CD8-positive, alpha-beta T cell (primary cell): ENCODE measurements at regions of chr6 and their contacts with region 1.

Region 1: DNA sequence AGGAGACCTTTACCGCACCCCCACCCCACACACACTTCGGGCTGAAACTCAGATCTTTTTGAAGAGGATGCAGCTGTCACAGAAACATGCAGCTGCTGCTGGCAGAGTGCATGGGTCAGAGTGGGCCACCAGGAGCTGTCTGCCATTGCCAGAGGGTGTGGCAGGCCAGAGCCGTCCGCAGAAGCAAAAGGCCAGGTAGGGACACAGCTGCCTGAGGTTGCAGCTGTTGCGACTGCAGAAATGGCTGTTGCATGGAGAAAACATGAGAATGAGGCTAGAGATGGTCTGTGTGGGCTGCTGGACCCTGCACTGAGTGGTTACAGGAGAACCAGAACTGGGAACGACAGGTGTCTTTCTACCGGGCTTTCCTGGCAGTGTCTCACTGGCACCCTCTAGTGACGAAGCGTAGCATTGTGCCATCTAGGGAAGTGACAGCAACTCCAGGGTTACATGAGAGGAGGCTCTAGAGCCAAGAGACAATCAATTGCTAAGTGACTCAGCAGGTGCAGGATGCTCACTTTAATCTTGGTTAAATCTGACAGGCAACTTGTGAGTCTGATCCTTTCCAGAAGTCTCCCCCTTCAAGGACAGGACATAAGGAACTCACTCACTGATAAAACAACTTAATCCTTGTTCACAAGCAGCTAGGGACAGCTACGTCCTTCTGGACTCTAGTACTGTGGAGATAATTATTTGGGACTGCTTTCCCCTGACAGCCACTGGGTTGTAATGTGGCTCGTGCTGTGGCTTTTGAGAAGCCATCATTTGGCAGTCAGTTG is 29.1 kb upstream of the SERPINB9 start:
- DNase-seq: peak; percentile 74 to 90 (median 86)
- ATAC-seq: peak; percentile 86
- H3K4me3 ChIP-seq: no peak overlapping the region
- H3K4me3 Mint-ChIP-seq: peak overlapping the region; percentile 45
- H3K27ac ChIP-seq: no peak overlapping the region
- H3K27ac Mint-ChIP-seq: peak overlapping the region; percentile 38
- H3K4me1 ChIP-seq: peaks cover 27% of the 10 kb centered on the region
- H3K4me1 Mint-ChIP-seq: peaks cover 27% of the 10 kb centered on the region
- H3K27me3 ChIP-seq: no peaks in the 10 kb centered on the region
- H3K27me3 Mint-ChIP-seq: no peaks in the 10 kb centered on the region
- CTCF ChIP-seq: peak; percentile 92

Region 2: DNA sequence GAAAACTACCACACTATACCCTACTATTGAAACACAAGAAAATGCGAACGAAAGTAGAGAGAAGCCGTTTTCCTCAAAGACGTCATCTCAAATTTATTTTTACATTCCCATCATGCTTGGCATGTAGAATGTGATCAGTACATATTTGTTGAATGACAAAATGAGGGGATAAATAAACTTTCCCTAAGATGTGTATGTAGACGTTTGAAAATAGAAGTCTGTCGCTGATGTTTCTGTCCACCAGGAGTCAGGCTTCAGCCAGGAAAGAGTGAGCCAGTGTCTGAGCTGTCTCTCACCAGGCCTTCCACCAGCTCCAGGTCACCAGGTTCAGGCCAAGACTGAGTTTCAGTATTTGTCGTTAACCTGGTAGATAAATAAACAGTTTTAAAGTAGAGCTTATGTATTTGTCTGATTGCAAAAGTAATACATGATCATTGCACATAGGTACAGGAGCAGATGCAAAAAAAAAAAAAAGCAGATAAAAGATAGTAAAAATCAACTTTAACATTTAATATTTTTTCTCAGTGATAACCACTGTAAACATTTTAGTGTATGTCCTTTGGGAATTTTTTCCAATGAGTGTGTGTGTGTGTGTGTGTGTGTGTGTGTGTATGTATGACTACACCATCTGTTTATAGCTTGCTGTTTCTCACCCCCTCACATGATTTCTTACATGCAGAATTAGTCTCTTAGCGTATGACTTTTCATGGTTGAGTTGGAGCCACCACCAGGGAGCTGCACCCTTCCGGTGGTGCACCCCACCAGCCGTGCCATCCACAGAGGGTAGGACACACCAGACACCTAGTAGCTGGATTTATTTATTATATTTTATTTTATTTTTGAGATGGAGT is 140.8 kb before region 1 on chr6:
- CTCF ChIA-PET with region 1: interaction called, 41 read pairs
- POLR2A ChIA-PET with region 1: no interaction called
- intact Hi-C with region 1: loop called (anchors 1 kb)
- DNase-seq: peak in 8 of 9 experiments; percentile 21 to 75 (median 47)
- ATAC-seq: peak; percentile 79
- H3K4me3 ChIP-seq: no peak overlapping the region
- H3K4me3 Mint-ChIP-seq: peak overlapping the region; percentile 13
- H3K27ac ChIP-seq: peak overlapping the region in 1 of 2 experiments; percentile 10
- H3K27ac Mint-ChIP-seq: peak overlapping the region; percentile 77
- H3K4me1 ChIP-seq: peaks cover 33% of the 10 kb centered on the region
- H3K4me1 Mint-ChIP-seq: peaks cover 32% of the 10 kb centered on the region
- H3K27me3 ChIP-seq: no peaks in the 10 kb centered on the region
- H3K27me3 Mint-ChIP-seq: no peaks in the 10 kb centered on the region
- CTCF ChIP-seq: peak; percentile 73

Region 3: GRCh38 chr6:2848851-2849250 is 83.3 kb before region 1 on chr6:
- CTCF ChIA-PET with region 1: interaction called, 306 read pairs
- POLR2A ChIA-PET with region 1: interaction called, 5 read pairs
- intact Hi-C with region 1: loop called (anchors 1 kb)
- DNase-seq: peak; percentile 30 to 87 (median 75)
- ATAC-seq: peak; percentile 88
- H3K4me3 ChIP-seq: no peak overlapping the region
- H3K4me3 Mint-ChIP-seq: peak overlapping the region; percentile 27
- H3K27ac ChIP-seq: peak overlapping the region; percentile 1 to 26
- H3K27ac Mint-ChIP-seq: peak overlapping the region; percentile 92
- H3K4me1 ChIP-seq: peaks cover 27% of the 10 kb centered on the region
- H3K4me1 Mint-ChIP-seq: peaks cover 40% of the 10 kb centered on the region
- H3K27me3 ChIP-seq: no peaks in the 10 kb centered on the region
- H3K27me3 Mint-ChIP-seq: no peaks in the 10 kb centered on the region
- CTCF ChIP-seq: no peak

Region 4: DNA sequence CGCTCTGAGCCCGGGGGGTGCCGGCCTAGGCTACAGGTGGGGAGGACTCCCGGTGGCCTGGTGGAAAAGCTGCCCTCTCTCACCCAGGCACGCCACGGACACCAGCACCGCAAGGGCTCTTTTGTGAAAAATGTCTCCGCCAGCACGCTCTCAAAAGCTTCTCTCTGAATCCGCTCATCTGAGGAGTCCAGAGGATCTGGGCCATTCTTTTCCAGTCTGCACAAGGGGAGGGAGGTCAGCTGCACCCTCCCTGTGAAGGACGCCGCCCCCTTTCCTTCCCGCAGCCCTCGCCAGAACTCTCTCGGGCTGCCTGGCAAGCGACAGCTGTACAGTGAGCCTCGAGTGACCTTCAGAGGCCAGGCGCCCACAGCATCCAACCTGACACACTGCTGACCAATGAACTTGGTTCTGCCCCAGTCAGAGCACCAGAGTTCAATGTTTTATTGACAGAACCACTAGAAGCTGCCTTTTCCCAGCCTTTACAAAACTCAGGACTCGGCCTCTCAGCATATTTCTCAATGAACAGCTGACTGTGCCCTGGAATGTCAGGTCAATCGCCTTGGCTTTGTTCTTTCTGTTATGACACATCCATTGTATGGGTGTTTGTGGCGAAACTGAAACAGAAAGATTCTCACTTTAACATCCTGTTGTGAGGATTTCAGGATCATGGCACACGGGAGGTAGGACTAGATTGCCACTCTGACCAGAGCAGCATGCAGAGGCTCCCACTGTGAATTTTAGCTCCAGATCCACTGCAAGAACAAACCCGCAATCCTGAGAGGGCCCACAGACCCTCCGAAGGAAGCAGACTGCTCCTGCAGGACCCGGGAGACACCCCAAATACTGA is 55.7 kb before region 1 on chr6:
- CTCF ChIA-PET with region 1: interaction called, 16 read pairs
- POLR2A ChIA-PET with region 1: no interaction called
- intact Hi-C with region 1: no loop called
- DNase-seq: peak in 3 of 9 experiments; percentile 38 to 67 (median 57)
- ATAC-seq: peak; percentile 9
- H3K4me3 ChIP-seq: peak overlapping the region; percentile 33 to 65
- H3K4me3 Mint-ChIP-seq: peak overlapping the region; percentile 87
- H3K27ac ChIP-seq: peak overlapping the region; percentile 24 to 77
- H3K27ac Mint-ChIP-seq: peak overlapping the region; percentile 93
- H3K4me1 ChIP-seq: peaks cover 68% of the 10 kb centered on the region
- H3K4me1 Mint-ChIP-seq: peaks cover 78% of the 10 kb centered on the region
- H3K27me3 ChIP-seq: no peaks in the 10 kb centered on the region
- H3K27me3 Mint-ChIP-seq: no peaks in the 10 kb centered on the region
- CTCF ChIP-seq: no peak

Region 5: DNA sequence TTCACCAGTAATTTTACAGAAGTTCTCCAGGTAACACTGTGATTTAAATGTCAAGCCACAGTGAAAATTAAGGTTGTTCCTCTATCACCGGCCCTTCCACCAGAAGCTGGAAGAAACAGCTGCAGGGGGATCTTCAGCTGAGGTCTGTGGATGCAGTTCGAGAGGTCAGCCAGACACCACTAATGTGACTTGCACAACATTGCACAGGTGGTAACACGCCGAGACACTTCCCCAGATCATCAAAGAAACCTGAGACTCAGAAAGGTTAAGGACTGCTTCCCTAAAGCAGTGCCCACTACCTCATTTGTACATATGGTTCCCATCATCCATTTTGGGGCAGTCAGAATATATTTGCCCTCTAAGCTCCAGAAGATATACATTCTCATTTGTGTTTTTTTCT is 21.0 kb before region 1 on chr6:
- CTCF ChIA-PET with region 1: interaction called, 31 read pairs
- POLR2A ChIA-PET with region 1: interaction called, 4 read pairs
- intact Hi-C with region 1: loop called (anchors 1 to 2 kb)
- DNase-seq: no peak
- ATAC-seq: no peak
- H3K4me3 ChIP-seq: no peak overlapping the region
- H3K4me3 Mint-ChIP-seq: no peak overlapping the region
- H3K27ac ChIP-seq: no peak overlapping the region
- H3K27ac Mint-ChIP-seq: no peak overlapping the region
- H3K4me1 ChIP-seq: no peaks in the 10 kb centered on the region
- H3K4me1 Mint-ChIP-seq: peaks cover 33% of the 10 kb centered on the region
- H3K27me3 ChIP-seq: no peaks in the 10 kb centered on the region
- H3K27me3 Mint-ChIP-seq: no peaks in the 10 kb centered on the region
- CTCF ChIP-seq: no peak

Region 6: GRCh38 chr6:2952557-2953095 is 20.5 kb after region 1 on chr6:
- CTCF ChIA-PET with region 1: interaction called, 119 read pairs
- POLR2A ChIA-PET with region 1: interaction called, 6 read pairs
- intact Hi-C with region 1: loop called in 1 of 2 experiments (anchors 2 kb)
- DNase-seq: peak in 8 of 9 experiments; percentile 44 to 81 (median 64)
- ATAC-seq: peak; percentile 94
- H3K4me3 ChIP-seq: peak overlapping the region in 1 of 2 experiments; percentile 18
- H3K4me3 Mint-ChIP-seq: peak overlapping the region; percentile 62
- H3K27ac ChIP-seq: no peak overlapping the region
- H3K27ac Mint-ChIP-seq: peak overlapping the region; percentile 67
- H3K4me1 ChIP-seq: peaks cover 13% of the 10 kb centered on the region
- H3K4me1 Mint-ChIP-seq: peaks cover 21% of the 10 kb centered on the region
- H3K27me3 ChIP-seq: no peaks in the 10 kb centered on the region
- H3K27me3 Mint-ChIP-seq: no peaks in the 10 kb centered on the region
- CTCF ChIP-seq: peak; percentile 85

Region 7: DNA sequence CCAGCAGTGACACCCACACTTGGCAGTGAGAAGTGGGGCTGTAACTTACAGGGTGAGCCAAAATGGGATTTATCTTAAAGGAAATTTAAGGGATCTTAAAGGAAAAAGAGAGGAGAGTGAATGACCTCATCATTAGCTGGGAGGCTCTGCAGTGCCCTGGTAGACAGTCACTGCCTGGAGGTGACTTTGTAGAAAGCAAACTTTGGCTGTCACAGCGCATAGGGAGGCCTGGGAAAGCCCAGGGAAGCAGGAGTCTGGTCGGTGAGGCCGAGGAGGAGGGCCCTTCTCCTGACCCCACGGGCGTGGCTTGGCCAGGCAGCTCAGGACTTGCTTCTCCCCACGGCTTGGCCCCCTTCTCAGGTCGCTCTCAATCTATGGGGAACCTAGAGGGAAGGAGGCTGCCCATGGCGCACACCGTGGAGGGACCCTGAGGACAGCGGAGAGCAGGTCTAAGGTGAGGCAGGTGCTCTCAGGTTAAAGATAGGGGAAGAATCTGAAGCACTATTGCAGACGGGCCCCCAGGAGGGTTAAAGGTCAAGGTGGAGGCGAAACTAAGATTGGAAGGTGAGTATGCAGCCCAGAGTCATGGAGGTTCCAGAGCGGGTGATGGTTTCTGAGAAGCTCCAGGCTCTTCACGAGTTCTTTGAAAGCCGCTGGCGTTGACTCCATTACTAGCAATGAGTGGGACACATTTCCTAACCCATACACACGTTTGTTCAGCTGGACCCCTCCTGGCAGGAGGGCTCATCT is 120.5 kb after region 1 on chr6:
- CTCF ChIA-PET with region 1: no interaction called
- POLR2A ChIA-PET with region 1: interaction called, 3 read pairs
- intact Hi-C with region 1: loop called (anchors 1 to 5 kb)
- DNase-seq: no peak
- ATAC-seq: no peak
- H3K4me3 ChIP-seq: no peak overlapping the region
- H3K4me3 Mint-ChIP-seq: peak overlapping the region; percentile 70
- H3K27ac ChIP-seq: no peak overlapping the region
- H3K27ac Mint-ChIP-seq: no peak overlapping the region
- H3K4me1 ChIP-seq: peaks cover 8% of the 10 kb centered on the region
- H3K4me1 Mint-ChIP-seq: peaks cover 13% of the 10 kb centered on the region
- H3K27me3 ChIP-seq: no peaks in the 10 kb centered on the region
- H3K27me3 Mint-ChIP-seq: no peaks in the 10 kb centered on the region
- CTCF ChIP-seq: no peak